Natural killer cell (primary cell): ENCODE measurements at regions of chr1 and their contacts with region 1.

Region 1: DNA sequence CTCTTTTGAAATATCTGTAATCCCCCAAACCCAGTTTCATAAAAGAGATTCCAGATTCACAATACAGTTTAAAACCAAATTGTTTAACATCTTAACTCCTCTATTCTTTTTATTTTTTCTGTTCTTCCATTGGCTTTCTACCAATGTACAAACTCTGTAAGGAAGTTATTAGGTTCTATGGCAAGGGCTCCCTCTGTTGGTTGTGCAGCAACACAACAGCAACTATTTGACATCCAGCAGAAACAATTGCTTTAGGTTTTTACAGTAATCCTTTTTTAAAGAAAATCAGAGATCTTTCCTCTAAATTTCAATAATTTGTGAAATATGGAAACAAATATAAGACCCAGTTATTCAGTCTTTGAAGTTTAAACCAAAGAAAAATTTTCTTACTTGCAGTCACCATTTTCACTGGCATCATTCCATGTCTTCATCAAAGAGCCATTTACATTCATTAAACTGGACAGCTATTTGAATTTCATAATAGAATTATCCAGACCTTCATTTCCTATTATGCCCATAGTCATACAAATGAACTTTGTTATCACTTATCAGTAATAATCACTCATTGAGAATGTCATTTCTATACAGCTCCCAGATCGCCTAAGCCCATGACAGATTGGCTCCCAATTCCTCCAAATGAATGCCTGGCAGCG is 46.5 kb upstream of the RNF11 start:
- DNase-seq: peak in 1 of 2 donors; percentile 78
- ATAC-seq: peak; percentile 58 to 71 (median 64)
- H3K4me3 ChIP-seq: no peak overlapping the region
- H3K4me3 Mint-ChIP-seq: no peak overlapping the region
- H3K27ac ChIP-seq: no peak overlapping the region
- H3K27ac Mint-ChIP-seq: no peak overlapping the region
- H3K4me1 ChIP-seq: no peaks in the 10 kb centered on the region
- H3K4me1 Mint-ChIP-seq: no peaks in the 10 kb centered on the region
- H3K27me3 ChIP-seq: no peaks in the 10 kb centered on the region
- H3K27me3 Mint-ChIP-seq: no peaks in the 10 kb centered on the region
- CTCF ChIP-seq: peak; percentile 98

Region 2: GRCh38 chr1:50368179-50369012 is 821.2 kb before region 1 on chr1:
- intact Hi-C with region 1: loop called (anchors 1 kb)
- DNase-seq: peak; percentile 28 to 48
- ATAC-seq: peak in 1 of 3 donors; percentile 82
- H3K4me3 ChIP-seq: no peak overlapping the region
- H3K4me3 Mint-ChIP-seq: no peak overlapping the region
- H3K27ac ChIP-seq: no peak overlapping the region
- H3K27ac Mint-ChIP-seq: no peak overlapping the region
- H3K4me1 ChIP-seq: peaks cover 6% of the 10 kb centered on the region
- H3K4me1 Mint-ChIP-seq: no peaks in the 10 kb centered on the region
- H3K27me3 ChIP-seq: peaks cover 12% of the 10 kb centered on the region
- H3K27me3 Mint-ChIP-seq: peaks cover 23 to 52% of the 10 kb centered on the region in 2 donors
- CTCF ChIP-seq: peak; percentile 77

Region 3: GRCh38 chr1:50774759-50775351 is 414.7 kb before region 1 on chr1:
- intact Hi-C with region 1: loop called (anchors 1 kb)
- DNase-seq: peak in 1 of 2 donors; percentile 71
- ATAC-seq: peak in 1 of 3 donors; percentile 61
- H3K4me3 ChIP-seq: no peak overlapping the region
- H3K4me3 Mint-ChIP-seq: no peak overlapping the region
- H3K27ac ChIP-seq: no peak overlapping the region
- H3K27ac Mint-ChIP-seq: no peak overlapping the region
- H3K4me1 ChIP-seq: no peaks in the 10 kb centered on the region
- H3K4me1 Mint-ChIP-seq: peaks cover 0 to 9% of the 10 kb centered on the region in 2 donors
- H3K27me3 ChIP-seq: no peaks in the 10 kb centered on the region
- H3K27me3 Mint-ChIP-seq: no peaks in the 10 kb centered on the region
- CTCF ChIP-seq: peak; percentile 82

Region 4: DNA sequence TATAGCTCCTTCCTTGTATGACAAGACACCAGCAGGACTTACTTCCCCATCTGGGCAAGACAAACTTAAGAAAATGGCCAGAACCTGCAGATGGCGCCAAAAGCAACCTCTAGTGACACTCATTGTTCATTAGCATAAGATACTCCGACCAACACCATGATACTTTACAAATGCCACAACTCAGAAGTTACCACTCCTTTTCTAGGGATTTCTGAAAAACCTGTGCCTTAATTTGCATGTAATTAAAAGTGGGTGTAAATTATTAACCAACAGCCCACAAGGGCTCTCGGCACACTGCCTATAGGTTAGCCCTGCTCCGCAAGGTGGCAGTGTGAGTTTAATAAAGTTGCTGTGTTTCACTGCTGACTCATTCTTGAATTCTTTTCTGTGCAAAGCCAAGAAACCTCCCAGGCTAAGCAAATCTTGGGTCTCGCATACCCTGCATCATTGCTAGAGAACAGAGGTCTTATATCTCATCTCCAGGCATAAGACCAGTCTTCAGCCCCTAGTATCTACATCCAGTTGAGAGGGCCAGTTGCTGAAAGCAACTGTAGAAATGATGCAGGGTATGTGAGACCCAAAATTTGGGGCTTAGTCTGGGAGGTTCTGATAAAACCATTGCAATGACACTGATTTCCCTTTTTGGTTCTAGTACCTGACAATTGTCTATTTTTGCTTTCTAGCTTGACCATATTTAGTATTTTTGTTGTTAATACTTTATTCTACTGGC is 315.9 kb before region 1 on chr1:
- intact Hi-C with region 1: loop called (anchors 1 kb)
- DNase-seq: peak; percentile 37 to 76
- ATAC-seq: peak; percentile 58 to 77 (median 76)
- H3K4me3 ChIP-seq: no peak overlapping the region
- H3K4me3 Mint-ChIP-seq: no peak overlapping the region
- H3K27ac ChIP-seq: no peak overlapping the region
- H3K27ac Mint-ChIP-seq: no peak overlapping the region
- H3K4me1 ChIP-seq: no peaks in the 10 kb centered on the region
- H3K4me1 Mint-ChIP-seq: peaks cover 32 to 36% of the 10 kb centered on the region in 2 donors
- H3K27me3 ChIP-seq: no peaks in the 10 kb centered on the region
- H3K27me3 Mint-ChIP-seq: no peaks in the 10 kb centered on the region
- CTCF ChIP-seq: peak; percentile 79

Region 5: DNA sequence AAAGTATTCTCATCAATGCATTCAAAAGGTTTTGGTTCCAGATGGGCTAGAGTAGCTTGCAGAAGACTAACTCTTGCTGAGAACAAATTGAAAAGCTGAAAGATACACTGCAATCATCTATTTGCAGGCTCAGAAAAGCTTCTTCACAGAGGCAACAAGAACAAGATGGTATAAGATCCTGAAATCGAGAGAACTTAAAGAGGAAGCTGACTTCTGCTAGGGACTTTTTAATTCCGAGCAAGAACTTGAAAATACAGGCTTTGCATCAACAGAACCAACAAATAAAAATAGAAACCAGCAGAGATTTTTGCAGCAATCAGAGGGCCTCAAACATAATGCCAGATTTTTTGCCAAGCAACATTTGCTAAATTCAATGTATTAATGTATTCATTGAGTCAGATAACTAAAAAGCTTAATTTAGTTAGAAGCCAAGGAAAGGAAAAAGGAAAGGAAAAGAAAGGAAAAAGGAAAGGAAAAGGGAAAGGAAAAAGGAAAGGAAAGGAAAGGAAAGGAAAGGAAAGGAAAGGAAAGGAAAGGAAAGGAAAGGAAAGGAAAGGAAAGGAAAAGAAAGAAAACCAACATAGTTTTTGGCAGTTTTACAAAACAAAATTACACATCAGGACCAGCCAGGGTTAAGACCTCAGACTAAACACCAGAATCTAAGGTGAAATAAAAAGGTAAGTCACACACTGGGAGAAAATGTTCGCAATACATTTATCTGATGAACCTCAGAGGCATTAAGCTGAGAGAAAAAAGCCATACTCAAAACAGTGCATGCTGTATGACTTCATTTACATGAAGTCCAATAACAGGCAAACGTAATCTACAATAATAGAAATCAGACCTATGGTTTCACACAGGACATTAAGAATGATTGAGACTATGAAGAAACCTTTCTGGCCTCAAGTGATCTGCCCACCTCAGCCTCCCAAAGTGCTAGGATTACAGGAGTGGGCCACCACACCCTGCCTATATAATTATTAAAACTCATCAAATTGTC is 272.1 kb before region 1 on chr1:
- intact Hi-C with region 1: no loop called
- DNase-seq: no peak
- ATAC-seq: no peak
- H3K4me3 ChIP-seq: no peak overlapping the region
- H3K4me3 Mint-ChIP-seq: no peak overlapping the region
- H3K27ac ChIP-seq: no peak overlapping the region
- H3K27ac Mint-ChIP-seq: no peak overlapping the region
- H3K4me1 ChIP-seq: no peaks in the 10 kb centered on the region
- H3K4me1 Mint-ChIP-seq: peaks cover 30 to 37% of the 10 kb centered on the region in 2 donors
- H3K27me3 ChIP-seq: no peaks in the 10 kb centered on the region
- H3K27me3 Mint-ChIP-seq: no peaks in the 10 kb centered on the region
- CTCF ChIP-seq: no peak

Region 6: GRCh38 chr1:50929376-50929958 is 260.1 kb before region 1 on chr1:
- intact Hi-C with region 1: loop called (anchors 1 kb)
- DNase-seq: peak in 1 of 2 donors; percentile 54
- ATAC-seq: no peak
- H3K4me3 ChIP-seq: no peak overlapping the region
- H3K4me3 Mint-ChIP-seq: no peak overlapping the region
- H3K27ac ChIP-seq: no peak overlapping the region
- H3K27ac Mint-ChIP-seq: no peak overlapping the region
- H3K4me1 ChIP-seq: no peaks in the 10 kb centered on the region
- H3K4me1 Mint-ChIP-seq: peaks cover 29 to 46% of the 10 kb centered on the region in 2 donors
- H3K27me3 ChIP-seq: no peaks in the 10 kb centered on the region
- H3K27me3 Mint-ChIP-seq: no peaks in the 10 kb centered on the region
- CTCF ChIP-seq: peak; percentile 61

Region 7: GRCh38 chr1:51222136-51222787 is 32.7 kb after region 1 on chr1:
- intact Hi-C with region 1: no loop called
- DNase-seq: no peak
- ATAC-seq: no peak
- H3K4me3 ChIP-seq: no peak overlapping the region
- H3K4me3 Mint-ChIP-seq: no peak overlapping the region
- H3K27ac ChIP-seq: no peak overlapping the region
- H3K27ac Mint-ChIP-seq: no peak overlapping the region
- H3K4me1 ChIP-seq: no peaks in the 10 kb centered on the region
- H3K4me1 Mint-ChIP-seq: peaks cover 5 to 10% of the 10 kb centered on the region in 2 donors
- H3K27me3 ChIP-seq: no peaks in the 10 kb centered on the region
- H3K27me3 Mint-ChIP-seq: no peaks in the 10 kb centered on the region
- CTCF ChIP-seq: no peak

Region 8: GRCh38 chr1:51296383-51297357 is 107.1 kb after region 1 on chr1:
- intact Hi-C with region 1: loop called (anchors 1 kb)
- DNase-seq: peak; percentile 64 to 78
- ATAC-seq: peak; percentile 72 to 84 (median 83)
- H3K4me3 ChIP-seq: peak overlapping the region; percentile 39
- H3K4me3 Mint-ChIP-seq: peak overlapping the region; percentile 82
- H3K27ac ChIP-seq: no peak overlapping the region
- H3K27ac Mint-ChIP-seq: peak overlapping the region in 1 of 2 donors; percentile 52
- H3K4me1 ChIP-seq: peaks cover 13% of the 10 kb centered on the region
- H3K4me1 Mint-ChIP-seq: peaks cover 11 to 32% of the 10 kb centered on the region in 2 donors
- H3K27me3 ChIP-seq: no peaks in the 10 kb centered on the region
- H3K27me3 Mint-ChIP-seq: peaks cover 0 to 4% of the 10 kb centered on the region in 2 donors
- CTCF ChIP-seq: peak; percentile 83